ENCODE measurements at regions of chr4 and their contacts with region 1.

Region 1: DNA sequence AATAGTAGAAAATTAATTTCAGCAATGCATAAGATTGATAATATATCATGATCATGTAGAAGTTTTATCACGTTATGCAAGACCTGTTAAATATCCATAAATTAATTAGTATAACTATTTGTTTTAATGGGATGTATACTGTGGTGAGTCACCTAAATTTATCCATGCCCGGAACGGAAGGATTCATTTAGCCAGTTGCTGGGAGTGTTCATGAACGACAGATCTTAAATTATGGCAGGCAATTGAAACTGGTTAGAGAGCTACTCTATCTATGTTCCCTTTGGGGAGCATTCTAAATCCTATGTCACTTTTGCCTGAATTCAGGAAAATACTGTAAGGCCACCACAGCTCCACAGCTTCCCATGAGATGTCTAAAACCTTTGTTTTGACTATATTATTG is 1950.5 kb upstream of the AGA start:
- DNase-seq: no peak
- H3K4me3 ChIP-seq: no peak overlapping the region
- H3K27ac ChIP-seq: no peak overlapping the region
- H3K4me1 ChIP-seq: no peaks in the 10 kb centered on the region
- H3K27me3 ChIP-seq: no peaks in the 10 kb centered on the region
- CTCF ChIP-seq: no peak
- POLR2A ChIP-seq: no peak

Region 2: GRCh38 chr4:179465131-179465797 is 72.5 kb after region 1 on chr4:
- intact Hi-C with region 1: no loop called
- DNase-seq: no peak
- H3K4me3 ChIP-seq: no peak overlapping the region
- H3K27ac ChIP-seq: no peak overlapping the region
- H3K4me1 ChIP-seq: no peaks in the 10 kb centered on the region
- H3K27me3 ChIP-seq: no peaks in the 10 kb centered on the region
- CTCF ChIP-seq: no peak
- POLR2A ChIP-seq: no peak

Region 3: DNA sequence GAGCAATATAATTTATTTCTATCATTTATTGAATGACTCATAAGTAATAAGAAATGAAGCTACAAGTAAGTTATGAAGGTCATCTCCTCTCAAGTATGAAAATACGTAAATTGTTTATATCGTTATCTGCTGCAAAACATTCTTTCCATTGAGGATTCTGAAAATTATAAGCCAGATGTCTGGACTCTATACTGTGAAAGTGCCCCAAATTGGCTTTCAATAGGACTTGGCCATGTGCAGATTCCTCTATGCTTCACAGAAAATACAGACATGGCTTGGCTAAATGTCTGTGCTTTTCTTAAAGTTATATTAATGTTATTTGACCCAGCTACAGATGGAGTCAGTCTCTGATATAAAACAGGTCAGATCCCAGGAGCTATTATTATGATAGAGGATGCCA is 159.3 kb after region 1 on chr4:
- intact Hi-C with region 1: no loop called
- DNase-seq: no peak
- H3K4me3 ChIP-seq: no peak overlapping the region
- H3K27ac ChIP-seq: no peak overlapping the region
- H3K4me1 ChIP-seq: no peaks in the 10 kb centered on the region
- H3K27me3 ChIP-seq: no peaks in the 10 kb centered on the region
- CTCF ChIP-seq: no peak
- POLR2A ChIP-seq: no peak

Region 4: GRCh38 chr4:181173046-181173445 is 1780.3 kb after region 1 on chr4:
- intact Hi-C with region 1: loop called (anchors 5 kb)
- DNase-seq: no peak
- H3K4me3 ChIP-seq: no peak overlapping the region
- H3K27ac ChIP-seq: no peak overlapping the region
- H3K4me1 ChIP-seq: no peaks in the 10 kb centered on the region
- H3K27me3 ChIP-seq: no peaks in the 10 kb centered on the region
- CTCF ChIP-seq: no peak
- POLR2A ChIP-seq: no peak

Measured in vagina (tissue), 2 donors.